AG04449 (cell line): ENCODE measurements at regions of chr1 and their contacts with region 1.

Region 1: GRCh38 chr1:203504397-203505250 is 10.7 kb downstream of the OPTC start:
- DNase-seq: no peak
- H3K4me3 ChIP-seq: no peak overlapping the region
- CTCF ChIP-seq: peak; percentile 71

Region 2: GRCh38 chr1:203280996-203281395 is 223.6 kb before region 1 on chr1:
- CTCF ChIA-PET with region 1: no interaction called
- POLR2A ChIA-PET with region 1: no interaction called
- DNase-seq: peak; percentile 14
- H3K4me3 ChIP-seq: no peak overlapping the region
- CTCF ChIP-seq: peak; percentile 21

Region 3: DNA sequence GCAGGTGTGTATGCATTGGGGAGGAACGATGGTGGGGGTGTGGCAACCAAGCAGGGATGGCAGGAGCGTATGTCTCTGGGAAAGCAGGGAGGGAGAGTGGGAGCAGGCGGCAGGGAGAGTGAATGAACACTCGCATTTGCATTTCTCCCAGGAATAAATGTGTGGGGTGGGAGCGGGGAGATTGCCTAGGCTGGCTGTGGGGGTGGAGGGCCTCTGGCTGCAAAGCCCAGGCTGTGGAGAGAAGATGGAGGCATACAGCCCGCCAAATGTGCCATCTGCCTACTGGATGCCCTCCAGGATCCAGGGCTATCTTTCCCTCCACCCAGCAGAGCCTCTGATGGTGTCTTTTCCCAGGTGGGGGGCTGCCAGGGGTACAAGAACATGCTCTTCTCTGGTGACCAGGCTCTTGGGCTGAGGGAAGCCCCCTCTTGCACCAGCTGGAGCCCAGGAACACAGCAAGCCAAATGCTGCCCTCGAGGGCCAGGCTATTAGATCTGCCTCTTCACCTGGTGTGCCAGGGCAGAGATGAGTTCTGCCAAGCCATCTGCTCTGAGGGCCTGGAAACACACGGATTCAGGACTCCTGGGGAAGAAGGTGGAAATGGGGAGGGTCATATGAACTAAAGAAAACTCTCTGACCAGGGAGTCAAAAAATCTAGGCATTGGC is 12.4 kb before region 1 on chr1:
- CTCF ChIA-PET with region 1: interaction called, 33 read pairs
- POLR2A ChIA-PET with region 1: no interaction called
- DNase-seq: no peak
- H3K4me3 ChIP-seq: no peak overlapping the region
- CTCF ChIP-seq: no peak

Region 4: GRCh38 chr1:203625628-203626019 is 121.0 kb after region 1 on chr1:
- CTCF ChIA-PET with region 1: interaction called, 60 read pairs
- POLR2A ChIA-PET with region 1: interaction called, 3 read pairs
- DNase-seq: no peak
- H3K4me3 ChIP-seq: no peak overlapping the region
- CTCF ChIP-seq: no peak

Region 5: DNA sequence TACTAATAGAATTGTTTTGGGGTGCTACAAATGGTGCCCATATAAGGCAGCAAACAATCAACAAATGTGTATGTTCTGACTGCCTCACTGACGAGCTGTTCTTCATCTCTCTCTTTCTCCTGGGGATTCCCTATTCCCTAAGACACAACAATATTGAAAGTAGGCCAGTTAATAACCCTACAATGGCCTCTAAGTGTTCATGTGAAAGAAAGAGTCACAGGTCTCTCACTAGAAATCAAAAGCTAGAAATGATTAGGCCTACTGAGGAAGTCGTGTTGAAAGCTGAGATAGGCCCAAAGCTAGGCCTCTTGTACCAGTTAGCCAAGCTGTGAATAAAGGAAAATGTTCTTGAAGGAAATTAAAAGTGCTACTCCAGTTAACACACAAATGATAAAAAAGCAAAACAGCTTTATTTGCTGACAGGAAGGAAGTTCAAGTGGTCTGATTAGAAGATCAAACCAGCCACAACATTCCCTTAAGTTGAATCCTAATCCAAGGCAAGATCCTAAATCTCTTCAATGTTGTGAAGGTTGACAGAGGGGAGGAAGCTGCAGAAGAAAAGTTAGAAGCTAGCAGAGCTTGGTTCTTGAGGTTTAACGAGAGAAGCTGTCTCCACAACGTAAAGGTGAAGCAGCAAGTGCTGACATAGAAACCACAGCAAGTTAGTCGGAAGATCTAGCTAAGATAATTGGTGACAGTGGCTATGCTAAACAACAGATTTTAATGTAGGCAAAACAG is 148.3 kb after region 1 on chr1:
- CTCF ChIA-PET with region 1: interaction called, 15 read pairs
- POLR2A ChIA-PET with region 1: no interaction called
- DNase-seq: no peak
- H3K4me3 ChIP-seq: no peak overlapping the region
- CTCF ChIP-seq: no peak

Region 6: DNA sequence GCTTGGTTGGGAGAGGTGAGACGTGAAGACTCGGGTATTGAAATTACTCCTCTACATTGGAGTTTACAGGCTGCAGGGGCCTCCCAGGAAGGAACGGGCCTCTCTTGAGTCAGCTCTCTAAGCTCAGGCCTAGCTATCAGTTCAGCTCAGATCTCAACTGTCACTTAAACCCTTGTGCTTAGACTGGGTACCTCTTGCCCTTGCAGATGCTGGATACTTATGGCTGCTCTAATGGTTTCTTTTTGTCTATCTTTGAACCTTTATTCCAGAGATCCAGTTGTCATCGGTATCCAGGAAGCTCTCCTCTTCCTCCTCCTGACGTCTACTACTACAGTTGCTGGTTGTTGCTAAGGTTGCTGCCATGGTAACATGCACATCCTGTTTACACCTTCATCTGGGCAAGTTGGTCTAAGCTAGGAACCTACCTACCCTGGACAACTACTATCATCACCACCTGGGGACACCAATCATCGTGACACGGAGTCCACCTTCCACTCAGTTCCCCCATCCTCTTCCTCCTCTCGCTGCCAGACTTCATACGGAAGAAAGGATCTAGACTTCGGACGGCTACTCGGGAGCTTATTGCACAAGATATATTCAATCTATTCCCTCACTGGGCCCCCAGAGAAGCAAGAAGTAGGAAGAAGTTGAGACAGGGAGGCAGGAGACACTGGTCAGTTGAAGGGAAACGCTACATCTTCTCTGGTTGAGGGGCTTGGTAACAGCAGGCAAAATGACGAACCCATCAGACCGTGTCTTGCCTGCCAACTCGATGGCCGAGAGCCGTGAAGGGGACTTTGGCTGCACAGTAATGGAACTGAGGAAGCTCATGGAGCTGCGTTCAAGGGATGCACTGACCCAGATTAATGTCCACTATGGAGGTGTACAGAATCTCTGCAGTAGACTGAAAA is 178.1 kb after region 1 on chr1:
- CTCF ChIA-PET with region 1: interaction called, 74 read pairs
- POLR2A ChIA-PET with region 1: no interaction called
- DNase-seq: no peak
- H3K4me3 ChIP-seq: no peak overlapping the region
- CTCF ChIP-seq: no peak

Region 7: DNA sequence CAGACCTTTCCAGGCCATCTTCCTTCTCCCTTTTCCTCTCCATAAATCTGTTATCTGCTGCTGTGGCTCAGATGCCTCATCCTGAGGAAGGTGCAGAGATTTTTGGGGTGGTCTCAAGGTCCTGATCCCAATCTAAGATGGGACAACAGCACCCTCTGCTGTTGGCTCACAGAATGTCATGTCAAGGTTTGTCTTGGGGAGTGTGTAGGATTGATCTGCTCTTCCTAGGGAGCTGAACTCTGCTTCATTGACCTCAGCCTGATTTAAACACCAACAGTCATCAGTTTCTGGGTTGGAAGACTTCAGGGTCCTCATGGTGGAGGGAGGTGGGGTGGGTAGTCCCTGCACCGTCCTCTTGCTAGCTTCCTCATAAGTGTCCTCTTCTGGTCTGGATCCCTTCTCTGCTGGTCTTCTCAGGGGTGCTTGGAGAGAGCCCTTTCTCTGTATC is 197.5 kb after region 1 on chr1:
- CTCF ChIA-PET with region 1: interaction called, 294 read pairs
- POLR2A ChIA-PET with region 1: no interaction called
- DNase-seq: no peak
- H3K4me3 ChIP-seq: no peak overlapping the region
- CTCF ChIP-seq: peak; percentile 68